ENCODE measurements at regions of chr2 and their contacts with region 1.

Region 1: GRCh38 chr2:121071034-121071504 is 213.9 kb downstream of the TFCP2L1 start:
- DNase-seq: peak; percentile 68 to 91 (median 90)
- H3K4me3 ChIP-seq: no peak overlapping the region
- H3K27ac ChIP-seq: no peak overlapping the region
- H3K4me1 ChIP-seq: no peaks in the 10 kb centered on the region
- H3K27me3 ChIP-seq: no peaks in the 10 kb centered on the region
- CTCF ChIP-seq: peak; percentile 82 to 92 (median 85)
- EP300 ChIP-seq: no peak
- POLR2A ChIP-seq: no peak

Region 2: DNA sequence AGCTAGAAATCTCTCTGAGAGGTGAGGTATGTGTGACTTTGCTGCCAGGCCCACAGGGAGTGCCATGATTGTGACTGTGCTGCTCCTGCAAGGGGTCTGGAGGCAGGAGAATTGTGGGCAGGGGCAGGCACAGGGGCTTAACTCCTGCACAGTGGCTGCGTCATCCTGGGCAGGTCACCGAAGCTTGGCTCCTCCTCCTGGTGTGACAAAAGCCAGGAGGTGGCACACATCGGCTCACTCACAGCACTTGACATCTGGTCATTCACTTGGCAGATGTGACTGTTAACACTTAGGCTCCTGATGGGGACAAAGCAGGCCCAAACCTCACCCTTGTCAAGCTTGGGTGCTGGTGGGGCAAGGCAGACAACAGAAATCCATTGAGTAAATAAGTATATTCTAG is 371.8 kb before region 1 on chr2:
- intact Hi-C with region 1: loop called (anchors 2 to 5 kb)
- DNase-seq: no peak
- H3K4me3 ChIP-seq: no peak overlapping the region
- H3K27ac ChIP-seq: no peak overlapping the region
- H3K4me1 ChIP-seq: no peaks in the 10 kb centered on the region
- H3K27me3 ChIP-seq: no peaks in the 10 kb centered on the region
- CTCF ChIP-seq: no peak
- EP300 ChIP-seq: no peak
- POLR2A ChIP-seq: no peak

Region 3: DNA sequence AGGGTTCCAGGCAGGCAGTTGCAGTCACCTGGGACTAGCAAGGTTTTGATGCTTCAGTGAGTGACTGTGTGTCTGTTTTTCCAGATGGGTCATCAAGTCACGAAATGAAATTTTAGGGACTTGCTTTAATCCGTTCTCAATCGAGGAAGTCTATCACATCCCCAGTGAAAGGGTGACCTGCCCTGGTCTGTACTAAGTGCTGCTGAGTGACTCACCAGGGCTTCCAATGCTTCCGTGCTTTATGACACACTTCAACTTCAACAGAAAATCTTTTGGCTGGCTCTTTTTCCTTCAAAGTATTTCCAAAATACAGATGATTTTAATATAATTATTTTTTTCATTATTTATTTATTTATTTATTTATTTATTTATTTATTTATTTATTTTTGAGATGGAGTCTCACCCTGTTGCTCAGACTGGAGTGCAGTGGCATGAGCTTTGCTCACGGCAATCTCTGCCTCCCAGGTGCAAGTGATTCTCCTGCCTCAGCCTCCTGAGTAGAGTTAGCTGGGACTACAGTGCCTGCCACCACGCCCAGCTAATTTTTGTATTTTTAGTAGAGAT is 195.6 kb after region 1 on chr2:
- intact Hi-C with region 1: no loop called
- DNase-seq: no peak
- H3K4me3 ChIP-seq: no peak overlapping the region
- H3K27ac ChIP-seq: no peak overlapping the region
- H3K4me1 ChIP-seq: no peaks in the 10 kb centered on the region
- H3K27me3 ChIP-seq: no peaks in the 10 kb centered on the region
- CTCF ChIP-seq: no peak
- EP300 ChIP-seq: no peak
- POLR2A ChIP-seq: no peak

Measured in ovary (tissue), 10 donors.